ENCODE measurements at regions of chr14 and their contacts with region 1.

Region 1: GRCh38 chr14:24332268-24332993 is 2.4 kb downstream of the ADCY4 start:
- DNase-seq: no peak
- H3K4me3 ChIP-seq: peak overlapping the region; percentile 40
- H3K27ac ChIP-seq: no peak overlapping the region
- H3K27me3 ChIP-seq: peaks cover 49% of the 10 kb centered on the region
- CTCF ChIP-seq: peak; percentile 76

Region 2: DNA sequence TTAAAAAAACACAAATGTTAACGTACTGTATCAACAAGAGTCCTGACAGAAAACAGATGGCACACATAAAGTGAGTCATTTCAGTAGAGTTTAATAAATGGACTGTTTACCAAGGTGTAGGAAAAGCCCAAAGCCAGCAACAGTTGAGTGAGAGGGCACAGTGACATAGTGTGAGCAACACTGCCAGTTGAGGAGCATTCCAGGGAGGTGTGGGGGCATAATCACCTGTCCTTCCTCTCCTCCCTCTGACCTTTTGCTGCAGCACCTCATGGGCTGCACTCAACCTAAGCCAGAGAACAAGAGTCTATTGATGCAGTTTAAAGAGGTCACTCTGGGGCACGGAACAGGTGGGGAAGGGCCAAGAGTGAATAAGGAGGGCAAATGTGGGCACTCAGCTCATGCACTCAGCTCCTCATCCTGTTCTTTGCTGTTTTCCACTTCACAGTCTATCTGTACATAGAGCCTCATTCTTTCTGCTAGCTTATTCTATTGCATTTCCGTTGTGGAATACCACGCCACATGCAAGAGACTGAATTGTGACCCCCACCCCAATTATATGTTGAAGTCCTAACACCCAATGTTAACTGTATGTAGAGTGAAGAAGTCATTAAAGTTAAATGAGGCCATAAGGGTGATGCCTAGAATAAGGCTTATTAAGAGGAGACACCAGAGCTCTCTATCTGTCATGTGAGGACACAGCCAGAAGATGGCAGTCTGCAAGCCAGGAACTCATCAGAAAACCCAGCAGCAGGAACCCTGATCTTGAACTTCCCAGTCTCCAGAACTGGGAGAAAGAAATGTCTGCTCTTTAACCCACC is 666.8 kb before region 1 on chr14:
- CTCF ChIA-PET with region 1: no interaction called
- POLR2A ChIA-PET with region 1: no interaction called
- DNase-seq: peak; percentile 2
- H3K4me3 ChIP-seq: no peak overlapping the region
- H3K27ac ChIP-seq: no peak overlapping the region
- H3K27me3 ChIP-seq: peaks cover 10% of the 10 kb centered on the region
- CTCF ChIP-seq: peak; percentile 65

Region 3: DNA sequence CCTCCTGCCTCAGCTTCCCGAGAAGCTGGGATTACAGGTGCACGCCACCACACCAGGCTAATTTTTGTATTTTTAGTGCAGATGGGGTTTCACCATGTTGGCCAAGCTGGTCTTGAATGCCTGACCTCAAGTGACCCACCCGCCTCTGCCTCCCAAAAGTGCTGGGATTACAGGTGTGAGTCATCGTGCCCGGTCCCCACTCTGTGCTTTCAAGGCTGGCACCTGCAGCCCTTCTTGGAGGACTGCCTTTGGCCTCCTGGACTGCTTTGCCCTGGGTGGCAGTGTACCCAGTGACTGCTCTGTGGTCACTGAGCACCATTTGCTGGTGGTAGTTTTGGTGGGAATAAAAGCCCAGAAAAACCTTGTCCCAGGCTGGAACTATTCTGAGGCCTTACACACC is 45.4 kb before region 1 on chr14:
- CTCF ChIA-PET with region 1: no interaction called
- POLR2A ChIA-PET with region 1: no interaction called
- DNase-seq: no peak
- H3K4me3 ChIP-seq: no peak overlapping the region
- H3K27ac ChIP-seq: no peak overlapping the region
- H3K27me3 ChIP-seq: no peaks in the 10 kb centered on the region
- CTCF ChIP-seq: no peak

Region 4: DNA sequence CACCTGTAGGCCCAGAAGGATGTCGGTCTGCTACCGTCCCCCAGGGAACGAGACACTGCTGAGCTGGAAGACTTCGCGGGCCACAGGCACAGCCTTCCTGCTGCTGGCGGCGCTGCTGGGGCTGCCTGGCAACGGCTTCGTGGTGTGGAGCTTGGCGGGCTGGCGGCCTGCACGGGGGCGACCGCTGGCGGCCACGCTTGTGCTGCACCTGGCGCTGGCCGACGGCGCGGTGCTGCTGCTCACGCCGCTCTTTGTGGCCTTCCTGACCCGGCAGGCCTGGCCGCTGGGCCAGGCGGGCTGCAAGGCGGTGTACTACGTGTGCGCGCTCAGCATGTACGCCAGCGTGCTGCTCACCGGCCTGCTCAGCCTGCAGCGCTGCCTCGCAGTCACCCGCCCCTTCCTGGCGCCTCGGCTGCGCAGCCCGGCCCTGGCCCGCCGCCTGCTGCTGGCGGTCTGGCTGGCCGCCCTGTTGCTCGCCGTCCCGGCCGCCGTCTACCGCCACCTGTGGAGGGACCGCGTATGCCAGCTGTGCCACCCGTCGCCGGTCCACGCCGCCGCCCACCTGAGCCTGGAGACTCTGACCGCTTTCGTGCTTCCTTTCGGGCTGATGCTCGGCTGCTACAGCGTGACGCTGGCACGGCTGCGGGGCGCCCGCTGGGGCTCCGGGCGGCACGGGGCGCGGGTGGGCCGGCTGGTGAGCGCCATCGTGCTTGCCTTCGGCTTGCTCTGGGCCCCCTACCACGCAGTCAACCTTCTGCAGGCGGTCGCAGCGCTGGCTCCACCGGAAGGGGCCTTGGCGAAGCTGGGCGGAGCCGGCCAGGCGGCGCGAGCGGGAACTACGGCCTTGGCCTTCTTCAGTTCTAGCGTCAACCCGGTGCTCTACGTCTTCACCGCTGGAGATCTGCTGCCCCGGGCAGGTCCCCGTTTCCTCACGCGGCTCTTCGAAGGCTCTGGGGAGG is 21.5 kb before region 1 on chr14 and contains the start of gene LTB4R:
- CTCF ChIA-PET with region 1: interaction called, 35 read pairs
- POLR2A ChIA-PET with region 1: no interaction called
- DNase-seq: no peak
- H3K4me3 ChIP-seq: peak within 1 kb of the TSS; percentile 20; the same call in 1 of the 2 replicates
- H3K27ac ChIP-seq: no peak within 1 kb of the TSS
- H3K27me3 ChIP-seq: peaks cover 2% of the 10 kb centered on the region
- CTCF ChIP-seq: peak; percentile 12; the same call in 1 of the 2 replicates
- polyA plus RNA-seq, gene LTB4R: 0.98 and 1.2 TPM in 2 replicates

Region 5: GRCh38 chr14:24351517-24351916 is 19.1 kb after region 1 on chr14:
- CTCF ChIA-PET with region 1: interaction called, 74 read pairs
- POLR2A ChIA-PET with region 1: interaction called, 4 read pairs
- DNase-seq: no peak
- H3K4me3 ChIP-seq: no peak overlapping the region
- H3K27ac ChIP-seq: no peak overlapping the region
- H3K27me3 ChIP-seq: peaks cover 32% of the 10 kb centered on the region
- CTCF ChIP-seq: no peak; the same call in 1 of the 2 replicates

Region 6: DNA sequence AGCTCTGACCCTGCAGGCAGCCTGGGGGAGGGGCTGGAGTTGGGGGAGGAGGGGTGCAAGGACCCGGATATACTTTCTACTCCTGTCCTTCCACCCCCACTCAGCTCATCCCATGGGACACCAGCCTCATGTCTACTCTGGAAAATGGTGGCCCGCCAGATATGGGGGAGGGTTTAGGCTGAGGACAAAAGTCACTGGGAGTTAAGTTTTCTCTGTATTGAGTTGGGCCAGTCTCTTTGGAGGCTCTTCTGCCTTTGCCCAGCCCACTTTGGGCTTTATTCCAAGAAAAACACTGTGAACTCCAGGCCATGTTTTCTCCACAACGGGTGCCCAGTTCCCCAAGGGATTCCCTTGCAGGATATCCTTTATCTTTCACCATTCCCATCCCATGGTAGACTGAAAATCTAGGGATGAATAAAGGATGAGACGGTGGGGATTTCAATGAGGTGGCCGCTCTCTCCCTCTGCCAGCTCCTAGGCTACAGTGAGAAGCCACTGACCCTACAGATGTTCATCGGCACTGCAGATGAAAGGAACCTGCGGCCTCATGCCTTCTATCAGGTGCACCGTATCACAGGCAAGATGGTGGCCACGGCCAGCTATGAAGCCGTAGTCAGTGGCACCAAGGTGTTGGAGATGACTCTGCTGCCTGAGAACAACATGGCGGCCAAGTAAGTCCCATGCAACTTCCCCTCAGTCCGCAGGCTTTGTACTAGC is 40.4 kb after region 1 on chr14:
- CTCF ChIA-PET with region 1: interaction called, 19 read pairs
- POLR2A ChIA-PET with region 1: no interaction called
- DNase-seq: no peak
- H3K4me3 ChIP-seq: no peak overlapping the region
- H3K27ac ChIP-seq: no peak overlapping the region
- H3K27me3 ChIP-seq: no peaks in the 10 kb centered on the region
- CTCF ChIP-seq: no peak

Region 7: GRCh38 chr14:24411443-24412389 is 79.3 kb after region 1 on chr14:
- CTCF ChIA-PET with region 1: interaction called, 49 read pairs
- POLR2A ChIA-PET with region 1: no interaction called
- DNase-seq: no peak
- H3K4me3 ChIP-seq: no peak overlapping the region
- H3K27ac ChIP-seq: no peak overlapping the region
- H3K27me3 ChIP-seq: peaks cover 6% of the 10 kb centered on the region
- CTCF ChIP-seq: peak; percentile 77

Region 8: DNA sequence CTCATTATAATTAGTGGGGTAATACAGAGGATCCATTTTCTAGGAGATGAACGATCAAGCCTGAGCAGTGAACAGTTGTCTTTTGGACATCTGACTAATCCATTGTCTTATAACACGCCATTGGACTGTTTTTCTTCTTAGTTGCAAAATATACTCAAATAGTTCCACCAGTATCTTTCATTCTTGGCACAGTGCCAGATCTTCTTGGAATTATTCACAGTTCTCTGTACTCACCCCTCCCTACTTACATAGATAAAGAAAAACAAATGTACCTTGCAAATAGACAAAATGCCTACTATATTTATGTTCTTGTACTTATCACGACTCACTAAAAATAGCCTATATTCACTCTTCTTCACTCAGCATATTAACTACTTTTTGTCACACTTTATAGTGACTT is 93.3 kb after region 1 on chr14:
- CTCF ChIA-PET with region 1: interaction called, 712 read pairs
- POLR2A ChIA-PET with region 1: interaction called, 6 read pairs
- DNase-seq: no peak
- H3K4me3 ChIP-seq: no peak overlapping the region
- H3K27ac ChIP-seq: no peak overlapping the region
- H3K27me3 ChIP-seq: peaks cover 5% of the 10 kb centered on the region
- CTCF ChIP-seq: no peak

Region 9: GRCh38 chr14:24741871-24742270 is 409.4 kb after region 1 on chr14:
- CTCF ChIA-PET with region 1: no interaction called
- POLR2A ChIA-PET with region 1: no interaction called
- DNase-seq: no peak
- H3K4me3 ChIP-seq: no peak overlapping the region
- H3K27ac ChIP-seq: no peak overlapping the region
- H3K27me3 ChIP-seq: no peaks in the 10 kb centered on the region
- CTCF ChIP-seq: no peak

Measured in AG04450 (cell line).